OCI-LY7 (cell line): ENCODE measurements at regions of chr1 and their contacts with region 1.

Region 1: GRCh38 chr1:24186993-24187805 is at the start of gene IFNLR1:
- DNase-seq: peak; percentile 91
- H3K4me3 ChIP-seq: peak within 1 kb of the TSS; percentile 97
- H3K27ac ChIP-seq: peak within 1 kb of the TSS; percentile 100
- H3K4me1 ChIP-seq: peaks cover 81% of the 10 kb centered on the region
- CTCF ChIP-seq: no peak
- total RNA-seq, gene IFNLR1: 24.6 and 29.4 TPM in 2 replicates

Region 2: GRCh38 chr1:23979878-23980724 is 207.1 kb before region 1 on chr1 and contains the start of gene SRSF10:
- CTCF ChIA-PET with region 1: no interaction called
- POLR2A ChIA-PET with region 1: no interaction called
- intact Hi-C with region 1: loop called (anchors 2 kb)
- DNase-seq: peak; percentile 100
- H3K4me3 ChIP-seq: peak within 1 kb of the TSS; percentile 96
- H3K27ac ChIP-seq: peak within 1 kb of the TSS; percentile 94
- H3K4me1 ChIP-seq: peaks cover 70% of the 10 kb centered on the region
- CTCF ChIP-seq: peak; percentile 45
- total RNA-seq, gene SRSF10: 229 and 293 TPM in 2 replicates

Region 3: GRCh38 chr1:24150234-24151174 is 36.7 kb before region 1 on chr1:
- CTCF ChIA-PET with region 1: interaction called, 4 read pairs
- POLR2A ChIA-PET with region 1: interaction called, 11 read pairs
- intact Hi-C with region 1: loop called (anchors 2 kb)
- DNase-seq: peak; percentile 82
- H3K4me3 ChIP-seq: peak overlapping the region; percentile 47
- H3K27ac ChIP-seq: no peak overlapping the region
- H3K4me1 ChIP-seq: peaks cover 36% of the 10 kb centered on the region
- CTCF ChIP-seq: peak; percentile 88

Region 4: DNA sequence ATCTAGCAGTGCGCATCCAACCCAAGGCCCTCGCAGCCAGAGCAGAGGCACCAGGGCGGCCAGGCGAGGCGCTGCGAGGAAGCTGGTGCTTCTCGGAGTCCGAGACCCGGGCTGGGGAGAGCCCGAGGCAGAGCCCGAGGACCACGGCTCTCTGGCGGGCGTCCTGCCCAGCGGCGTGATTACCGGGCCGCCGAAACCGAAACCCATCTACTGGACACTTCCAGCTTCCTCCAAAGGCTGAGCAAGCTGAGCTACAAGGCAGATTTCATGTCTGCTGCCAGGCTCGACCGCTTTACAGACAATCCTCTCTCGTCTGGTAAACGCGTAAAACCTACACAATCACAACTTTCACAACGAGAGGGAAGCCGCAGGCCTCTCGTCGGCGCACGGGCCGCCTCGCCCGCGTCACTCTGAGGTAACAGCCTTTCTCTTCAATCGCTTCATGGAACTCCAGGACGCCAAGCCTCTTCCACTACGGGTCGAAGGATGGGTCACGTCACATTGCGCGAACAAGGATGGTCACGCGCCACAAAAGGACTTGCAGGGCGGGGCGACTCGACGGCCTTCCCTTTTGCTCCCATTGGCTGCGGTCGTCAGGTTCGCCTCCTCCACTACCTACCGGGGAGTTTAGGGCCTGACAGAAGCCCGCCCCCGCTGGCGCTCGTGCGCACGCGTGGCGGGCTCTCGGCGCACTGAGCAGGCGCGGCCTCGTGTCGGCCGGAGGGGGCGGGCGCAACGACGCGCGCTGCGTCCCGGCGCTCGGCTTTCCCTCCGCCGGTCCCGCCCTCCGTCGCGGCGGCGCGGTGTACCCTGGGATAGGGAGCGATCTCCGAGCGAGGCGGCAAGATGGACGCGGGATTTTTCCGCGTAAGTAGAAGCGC is 455.5 kb after region 1 on chr1 and contains the start of gene SRRM1:
- CTCF ChIA-PET with region 1: no interaction called
- POLR2A ChIA-PET with region 1: no interaction called
- intact Hi-C with region 1: loop called (anchors 5 kb)
- DNase-seq: peak; percentile 99
- H3K4me3 ChIP-seq: peak within 1 kb of the TSS; percentile 83
- H3K27ac ChIP-seq: peak within 1 kb of the TSS; percentile 82
- H3K4me1 ChIP-seq: peaks cover 22% of the 10 kb centered on the region
- CTCF ChIP-seq: peak; percentile 51
- total RNA-seq, gene SRRM1: 72.5 and 78.5 TPM in 2 replicates